Naive thymus-derived CD4-positive, alpha-beta T cell (primary cell): ENCODE measurements at regions of chr5 and their contacts with region 1.

Region 1: DNA sequence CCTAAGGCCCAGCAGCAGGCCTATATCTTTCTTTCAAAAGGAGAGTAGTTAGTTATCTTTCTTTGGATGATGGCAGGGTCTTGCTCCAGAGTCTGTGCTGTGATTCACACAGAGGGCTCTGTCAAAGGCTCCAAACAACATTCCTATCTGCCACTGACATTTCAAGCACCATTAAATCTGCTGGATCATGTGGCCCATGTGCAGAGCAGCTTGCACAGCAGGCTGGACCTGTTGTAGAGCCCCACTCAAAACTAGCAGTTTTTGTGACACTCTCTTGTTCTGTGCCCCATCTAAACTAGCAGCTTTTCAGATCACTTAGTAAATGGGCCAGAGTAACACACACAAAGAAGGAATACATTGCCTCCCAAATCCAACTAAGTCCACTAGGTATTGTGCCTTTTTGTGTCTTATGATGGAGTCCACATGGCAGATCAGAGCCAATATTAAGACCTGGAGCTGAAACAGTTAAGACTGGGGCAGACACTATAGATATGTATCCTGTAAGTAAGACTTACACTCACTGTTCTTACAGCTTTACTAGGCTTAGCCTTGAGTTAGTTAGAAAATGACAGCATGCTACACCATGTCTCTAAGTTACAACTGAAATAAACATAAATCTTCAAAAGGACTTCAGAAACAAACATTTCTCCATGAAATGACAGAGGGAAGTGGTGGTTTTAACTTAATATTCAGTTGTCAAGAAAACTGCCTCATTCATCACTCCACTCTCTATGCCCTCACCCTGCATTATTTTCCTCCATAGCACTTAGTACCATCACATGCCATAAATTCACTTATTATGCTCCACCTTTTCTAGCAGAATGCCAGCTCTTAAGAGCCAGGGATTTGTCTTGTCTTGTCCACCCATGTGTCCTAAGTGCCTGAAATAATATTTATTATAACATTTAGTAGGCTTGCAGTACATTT is 400.9 kb downstream of the RAB3C start:
- DNase-seq: no peak
- ATAC-seq: no peak
- H3K4me3 ChIP-seq: no peak overlapping the region
- H3K4me3 Mint-ChIP-seq: no peak overlapping the region
- H3K27ac ChIP-seq: no peak overlapping the region
- H3K27ac Mint-ChIP-seq: no peak overlapping the region
- H3K4me1 ChIP-seq: no peaks in the 10 kb centered on the region
- H3K4me1 Mint-ChIP-seq: peaks cover 0 to 21% (median 0%) of the 10 kb centered on the region in 7 donors
- H3K27me3 ChIP-seq: no peaks in the 10 kb centered on the region
- H3K27me3 Mint-ChIP-seq: no peaks in the 10 kb centered on the region

Region 2: DNA sequence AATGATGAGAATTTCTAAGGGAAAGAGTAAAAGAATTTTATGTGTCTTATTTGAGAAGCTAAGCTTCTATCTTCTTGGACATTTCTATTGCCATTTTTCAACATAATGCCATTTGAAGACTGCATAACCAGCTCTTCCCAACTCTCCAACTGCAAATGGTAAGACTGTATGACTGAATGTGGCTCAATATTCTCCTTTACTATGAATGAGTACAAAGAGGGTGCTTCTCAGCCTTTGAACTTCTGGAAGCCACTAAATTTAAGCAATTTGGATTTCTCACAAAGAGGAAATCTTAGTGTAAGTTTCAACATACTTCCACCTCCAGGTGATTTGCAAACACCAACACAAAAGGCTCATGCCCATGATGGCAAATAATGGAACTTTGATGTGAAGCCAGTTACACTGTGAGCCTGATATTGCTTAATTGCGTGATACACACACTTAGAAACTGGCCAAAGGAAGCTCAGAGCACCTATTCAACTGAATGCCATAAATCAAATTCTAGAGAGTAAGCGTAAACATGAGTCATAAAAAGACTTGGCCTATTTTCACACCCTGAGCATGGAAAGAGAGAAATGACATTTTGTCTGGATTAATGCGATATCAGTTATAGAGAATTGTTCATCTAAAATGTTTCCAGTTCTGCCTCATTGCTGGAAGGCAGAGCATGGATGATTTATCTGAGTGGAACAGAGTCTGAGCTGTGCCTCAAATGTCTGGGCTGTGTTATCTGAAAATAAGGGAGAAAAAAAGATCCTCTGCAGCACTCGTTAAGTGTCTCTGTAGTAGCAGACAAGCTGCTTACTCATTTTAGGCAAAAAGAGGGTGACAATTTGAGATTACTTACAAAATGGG is 669.2 kb before region 1 on chr5:
- CTCF ChIA-PET with region 1: no interaction called
- POLR2A ChIA-PET with region 1: no interaction called
- intact Hi-C with region 1: no loop called
- DNase-seq: no peak
- ATAC-seq: no peak
- H3K4me3 ChIP-seq: no peak overlapping the region
- H3K4me3 Mint-ChIP-seq: no peak overlapping the region
- H3K27ac ChIP-seq: no peak overlapping the region
- H3K27ac Mint-ChIP-seq: no peak overlapping the region
- H3K4me1 ChIP-seq: no peaks in the 10 kb centered on the region
- H3K4me1 Mint-ChIP-seq: peaks cover 0 to 3% (median 0%) of the 10 kb centered on the region in 7 donors
- H3K27me3 ChIP-seq: peaks cover 0 to 3% of the 10 kb centered on the region in 2 donors
- H3K27me3 Mint-ChIP-seq: peaks cover 0 to 32% (median 14%) of the 10 kb centered on the region in 5 donors

Region 3: GRCh38 chr5:58999804-59000595 is 16.2 kb after region 1 on chr5:
- CTCF ChIA-PET with region 1: no interaction called
- POLR2A ChIA-PET with region 1: interaction called, 3 read pairs
- intact Hi-C with region 1: loop called in 1 of 2 experiments (anchors 2 kb)
- DNase-seq: no peak
- ATAC-seq: no peak
- H3K4me3 ChIP-seq: no peak overlapping the region
- H3K4me3 Mint-ChIP-seq: no peak overlapping the region
- H3K27ac ChIP-seq: no peak overlapping the region
- H3K27ac Mint-ChIP-seq: peak overlapping the region in 2 of 9 donors; percentile 38 to 58
- H3K4me1 ChIP-seq: no peaks in the 10 kb centered on the region
- H3K4me1 Mint-ChIP-seq: peaks cover 26 to 71% (median 58%) of the 10 kb centered on the region in 7 donors
- H3K27me3 ChIP-seq: no peaks in the 10 kb centered on the region
- H3K27me3 Mint-ChIP-seq: no peaks in the 10 kb centered on the region

Region 4: DNA sequence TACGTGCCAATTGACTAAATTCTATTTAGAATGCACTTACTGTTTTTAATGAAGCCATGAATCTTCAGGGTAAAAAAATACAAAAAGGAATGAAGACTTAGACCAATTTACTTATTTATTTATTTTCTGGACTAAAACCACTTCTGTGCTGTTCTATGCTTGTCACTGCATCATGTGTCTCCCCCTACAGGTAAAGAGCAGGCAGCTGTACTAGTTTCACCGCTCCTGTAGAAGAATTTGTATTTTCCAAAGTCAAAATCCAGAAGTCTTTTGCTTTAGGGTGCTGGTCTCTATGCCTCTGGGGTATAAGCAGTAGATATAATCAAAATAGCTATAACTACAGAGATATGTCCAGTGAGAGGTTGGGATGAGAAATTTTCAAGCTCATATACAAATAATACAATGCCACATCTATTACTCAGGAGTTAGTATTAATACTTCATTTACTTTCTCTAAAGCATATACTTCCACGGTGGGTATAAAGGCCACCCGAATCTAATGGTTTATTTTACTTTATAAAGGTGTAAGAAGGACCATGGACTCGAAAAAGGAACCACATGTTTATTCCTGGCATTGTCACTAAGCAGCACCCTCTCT is 190.6 kb after region 1 on chr5:
- CTCF ChIA-PET with region 1: interaction called, 3 read pairs
- POLR2A ChIA-PET with region 1: no interaction called
- intact Hi-C with region 1: loop called (anchors 2 to 5 kb)
- DNase-seq: peak in 7 of 9 donors; percentile 35 to 67 (median 54)
- ATAC-seq: peak; percentile 86
- H3K4me3 ChIP-seq: no peak overlapping the region
- H3K4me3 Mint-ChIP-seq: no peak overlapping the region
- H3K27ac ChIP-seq: no peak overlapping the region
- H3K27ac Mint-ChIP-seq: peak overlapping the region in 1 of 9 donors; percentile 5
- H3K4me1 ChIP-seq: no peaks in the 10 kb centered on the region
- H3K4me1 Mint-ChIP-seq: peaks cover 0 to 48% (median 5%) of the 10 kb centered on the region in 7 donors
- H3K27me3 ChIP-seq: no peaks in the 10 kb centered on the region
- H3K27me3 Mint-ChIP-seq: no peaks in the 10 kb centered on the region